Kidney (tissue), 22 donors: ENCODE measurements at regions of chr1 and their contacts with region 1.

Region 1: GRCh38 chr1:12314333-12314903 is 84.6 kb downstream of the VPS13D start:
- DNase-seq: peak in 2 of 5 donors; percentile 50 to 56
- H3K4me3 ChIP-seq: no peak overlapping the region
- H3K27ac ChIP-seq: no peak overlapping the region
- H3K4me1 ChIP-seq: no peaks in the 10 kb centered on the region
- H3K27me3 ChIP-seq: no peaks in the 10 kb centered on the region
- CTCF ChIP-seq: peak; percentile 49

Region 2: DNA sequence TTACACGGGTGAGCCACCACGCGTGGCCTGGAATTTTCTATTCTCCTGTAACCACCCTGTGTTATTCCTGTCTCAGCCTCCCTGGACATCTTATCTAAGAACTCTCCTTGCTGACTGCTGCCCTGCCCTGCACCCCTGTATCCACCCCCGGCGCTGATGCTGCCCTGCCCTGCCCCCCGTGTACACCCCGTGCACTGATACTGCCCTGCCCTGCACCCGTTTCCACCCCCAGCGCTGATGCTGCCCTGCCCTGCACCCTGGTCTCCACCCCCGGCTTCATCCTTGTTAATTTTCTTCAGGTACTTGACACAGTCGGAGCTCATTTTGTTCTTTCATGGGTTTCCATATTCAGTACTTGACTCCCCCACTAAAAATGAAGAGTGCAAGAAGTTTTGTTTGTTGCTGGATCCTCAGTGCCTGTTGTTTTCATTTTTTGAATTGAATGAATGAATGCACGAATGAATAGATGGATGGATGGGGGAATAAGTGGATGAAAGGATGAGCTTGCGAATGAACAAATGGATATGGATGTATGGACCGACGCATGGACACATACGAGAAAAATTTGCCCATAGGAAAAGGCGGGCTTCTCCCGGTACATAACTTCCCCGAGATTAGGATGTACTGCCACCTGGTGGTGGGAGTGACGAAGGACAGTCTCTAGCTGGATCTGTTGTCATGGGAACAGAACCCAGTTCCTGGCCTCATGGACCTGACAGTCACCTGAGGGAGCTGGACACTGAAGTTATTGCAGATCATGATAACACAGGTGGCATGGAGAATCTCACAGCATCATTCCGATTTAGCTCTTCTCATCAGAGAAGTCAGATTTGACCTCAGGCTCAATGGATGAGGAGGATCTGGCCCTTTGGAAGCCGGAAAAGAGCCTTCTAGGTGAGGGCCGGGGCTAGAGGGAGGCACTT is 344.4 kb after region 1 on chr1:
- intact Hi-C with region 1: loop called (anchors 10 kb)
- DNase-seq: peak in 4 of 5 donors; percentile 78 to 95 (median 85)
- H3K4me3 ChIP-seq: no peak overlapping the region
- H3K27ac ChIP-seq: no peak overlapping the region
- H3K4me1 ChIP-seq: no peaks in the 10 kb centered on the region
- H3K27me3 ChIP-seq: no peaks in the 10 kb centered on the region
- CTCF ChIP-seq: peak; percentile 92